ENCODE measurements at regions of chr9 and their contacts with region 1.

Region 1: GRCh38 chr9:14372437-14373335 is 58.7 kb upstream of the NFIB start:
- DNase-seq: no peak
- ATAC-seq: no peak
- H3K4me3 ChIP-seq: no peak overlapping the region
- H3K4me3 Mint-ChIP-seq: no peak overlapping the region
- H3K27ac ChIP-seq: no peak overlapping the region
- H3K27ac Mint-ChIP-seq: no peak overlapping the region
- H3K4me1 ChIP-seq: no peaks in the 10 kb centered on the region
- H3K4me1 Mint-ChIP-seq: no peaks in the 10 kb centered on the region
- H3K27me3 ChIP-seq: no peaks in the 10 kb centered on the region
- H3K27me3 Mint-ChIP-seq: peaks cover 0 to 5% of the 10 kb centered on the region in 2 donors

Region 2: GRCh38 chr9:14383294-14383693 is 10.6 kb after region 1 on chr9:
- CTCF ChIA-PET with region 1: interaction called in 1 of 2 experiments, 3 read pairs
- POLR2A ChIA-PET with region 1: interaction called in 1 of 2 experiments, 10 read pairs
- DNase-seq: no peak
- ATAC-seq: no peak
- H3K4me3 ChIP-seq: no peak overlapping the region
- H3K4me3 Mint-ChIP-seq: no peak overlapping the region
- H3K27ac ChIP-seq: no peak overlapping the region
- H3K27ac Mint-ChIP-seq: no peak overlapping the region
- H3K4me1 ChIP-seq: no peaks in the 10 kb centered on the region
- H3K4me1 Mint-ChIP-seq: no peaks in the 10 kb centered on the region
- H3K27me3 ChIP-seq: no peaks in the 10 kb centered on the region
- H3K27me3 Mint-ChIP-seq: peaks cover 3 to 12% of the 10 kb centered on the region in 2 donors

Region 3: GRCh38 chr9:14515571-14516198 is 143.0 kb after region 1 on chr9:
- CTCF ChIA-PET with region 1: no interaction called
- POLR2A ChIA-PET with region 1: no interaction called
- DNase-seq: no peak
- ATAC-seq: no peak
- H3K4me3 ChIP-seq: no peak overlapping the region
- H3K4me3 Mint-ChIP-seq: no peak overlapping the region
- H3K27ac ChIP-seq: no peak overlapping the region
- H3K27ac Mint-ChIP-seq: no peak overlapping the region
- H3K4me1 ChIP-seq: no peaks in the 10 kb centered on the region
- H3K4me1 Mint-ChIP-seq: no peaks in the 10 kb centered on the region
- H3K27me3 ChIP-seq: no peaks in the 10 kb centered on the region
- H3K27me3 Mint-ChIP-seq: no peaks in the 10 kb centered on the region

Region 4: DNA sequence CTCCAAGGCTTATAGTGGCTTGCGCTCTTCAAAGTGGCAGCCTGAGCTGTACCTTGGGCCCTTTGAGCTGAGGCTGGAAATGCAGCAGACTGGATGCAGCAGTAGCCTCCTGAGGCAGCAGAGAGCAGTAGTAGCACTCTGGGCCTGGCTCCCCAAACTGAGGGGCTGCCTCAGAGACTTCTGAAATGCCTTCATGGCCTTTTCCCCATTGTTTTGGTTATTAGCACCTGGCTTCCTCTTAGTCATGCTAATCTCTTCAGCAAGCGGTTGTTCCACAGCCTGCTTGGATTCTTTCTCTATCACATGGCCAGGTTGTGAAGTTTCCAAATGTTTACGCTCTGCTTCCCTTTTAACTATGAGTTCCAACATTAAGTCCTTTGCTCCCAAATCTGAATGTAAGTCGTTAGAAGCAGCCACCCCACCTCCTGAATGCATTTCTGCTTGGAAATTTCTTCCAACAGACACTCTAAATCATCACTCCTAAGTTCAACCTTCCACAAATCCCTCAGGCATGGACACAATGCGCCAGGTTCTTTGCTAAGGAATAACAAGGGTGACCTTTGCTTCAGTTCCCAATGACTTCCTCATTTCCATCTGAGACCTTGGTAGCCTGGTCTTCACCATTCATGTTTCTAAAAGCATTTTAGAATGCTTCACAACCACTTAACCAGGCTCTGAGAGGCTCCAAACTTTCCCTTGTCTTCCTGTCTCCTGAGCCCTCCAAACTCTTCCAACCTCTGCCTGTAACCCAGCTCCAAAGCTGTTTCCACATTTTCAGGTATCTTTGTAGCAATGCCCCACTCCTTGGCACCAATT is 174.8 kb after region 1 on chr9:
- CTCF ChIA-PET with region 1: no interaction called
- POLR2A ChIA-PET with region 1: no interaction called
- DNase-seq: no peak
- ATAC-seq: no peak
- H3K4me3 ChIP-seq: no peak overlapping the region
- H3K4me3 Mint-ChIP-seq: no peak overlapping the region
- H3K27ac ChIP-seq: no peak overlapping the region
- H3K27ac Mint-ChIP-seq: no peak overlapping the region
- H3K4me1 ChIP-seq: no peaks in the 10 kb centered on the region
- H3K4me1 Mint-ChIP-seq: no peaks in the 10 kb centered on the region
- H3K27me3 ChIP-seq: peaks cover 0 to 3% of the 10 kb centered on the region in 2 experiments
- H3K27me3 Mint-ChIP-seq: peaks cover 0 to 4% of the 10 kb centered on the region in 2 donors